ENCODE measurements at regions of chr22 and their contacts with region 1.

Region 1: DNA sequence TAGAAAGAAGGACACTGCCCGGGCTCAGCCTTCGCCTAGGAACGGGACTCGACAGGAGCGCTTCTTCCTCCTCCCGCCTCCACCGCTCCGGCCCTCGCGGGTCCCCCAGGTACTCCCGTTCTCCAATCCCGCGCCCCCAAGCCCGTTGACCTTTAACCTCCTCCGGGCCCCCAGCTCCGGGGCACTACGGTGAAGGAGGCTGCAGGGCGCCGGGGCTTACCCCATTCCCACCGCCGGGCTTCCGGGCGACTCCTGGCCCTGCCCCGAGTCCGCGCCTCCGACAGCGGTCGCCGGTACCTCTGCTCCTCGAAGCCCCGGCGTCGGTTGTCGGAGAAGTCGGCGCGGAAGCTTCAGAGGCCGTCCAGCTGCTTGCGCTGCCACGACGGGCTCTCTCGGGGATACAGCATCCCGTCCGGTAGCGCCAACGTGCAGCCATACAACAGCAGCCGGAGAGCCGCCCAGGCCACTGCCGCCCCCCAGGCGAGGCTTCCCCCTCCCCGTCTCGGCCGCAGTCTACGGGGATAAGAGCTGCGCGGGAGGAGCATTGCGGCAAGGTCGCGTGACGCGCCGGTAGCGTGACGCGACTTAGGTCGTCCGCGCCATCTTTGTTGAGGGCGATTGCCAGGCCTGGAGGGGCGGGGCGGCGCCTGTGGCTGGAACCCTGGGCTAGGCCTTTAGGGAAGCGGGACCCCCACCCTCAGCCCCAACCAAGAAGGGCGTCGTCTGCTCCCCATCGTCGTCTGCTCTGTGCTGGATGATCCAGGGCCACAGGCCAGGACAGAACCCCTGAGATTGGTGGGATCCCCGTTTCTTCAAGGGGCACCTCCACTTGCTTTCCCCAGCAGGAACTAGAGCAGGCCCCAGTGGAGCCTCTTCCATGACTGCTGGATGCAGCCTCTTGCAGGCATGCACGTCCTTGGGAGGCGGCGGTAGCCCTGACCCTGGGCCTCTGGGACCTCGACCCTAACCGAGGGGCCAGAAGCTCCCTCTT is 26.3 kb downstream of the RGL4 start:
- DNase-seq: peak; percentile 65 to 92 (median 76)
- ATAC-seq: peak; percentile 97
- H3K4me3 ChIP-seq: peak overlapping the region; percentile 93
- H3K4me3 Mint-ChIP-seq: peak overlapping the region; percentile 90
- H3K27ac ChIP-seq: peak overlapping the region; percentile 64 to 68
- H3K27ac Mint-ChIP-seq: peak overlapping the region; percentile 85
- H3K4me1 ChIP-seq: peaks cover 27% of the 10 kb centered on the region
- H3K4me1 Mint-ChIP-seq: peaks cover 16% of the 10 kb centered on the region
- H3K27me3 ChIP-seq: no peaks in the 10 kb centered on the region
- H3K27me3 Mint-ChIP-seq: no peaks in the 10 kb centered on the region
- CTCF ChIP-seq: no peak

Region 2: GRCh38 chr22:23539135-23539838 is 177.8 kb before region 1 on chr22:
- CTCF ChIA-PET with region 1: no interaction called
- POLR2A ChIA-PET with region 1: no interaction called
- intact Hi-C with region 1: no loop called
- DNase-seq: peak; percentile 59 to 88 (median 66)
- ATAC-seq: peak; percentile 100
- H3K4me3 ChIP-seq: no peak overlapping the region
- H3K4me3 Mint-ChIP-seq: peak overlapping the region; percentile 20
- H3K27ac ChIP-seq: no peak overlapping the region
- H3K27ac Mint-ChIP-seq: no peak overlapping the region
- H3K4me1 ChIP-seq: peaks cover 6% of the 10 kb centered on the region
- H3K4me1 Mint-ChIP-seq: peaks cover 10% of the 10 kb centered on the region
- H3K27me3 ChIP-seq: no peaks in the 10 kb centered on the region
- H3K27me3 Mint-ChIP-seq: no peaks in the 10 kb centered on the region
- CTCF ChIP-seq: peak; percentile 81

Region 3: GRCh38 chr22:23696326-23696851 is 20.7 kb before region 1 on chr22:
- CTCF ChIA-PET with region 1: no interaction called
- POLR2A ChIA-PET with region 1: interaction called, 74 read pairs
- intact Hi-C with region 1: loop called (anchors 1 kb)
- DNase-seq: peak; percentile 71 to 92 (median 76)
- ATAC-seq: peak; percentile 97
- H3K4me3 ChIP-seq: peak overlapping the region; percentile 64
- H3K4me3 Mint-ChIP-seq: peak overlapping the region; percentile 89
- H3K27ac ChIP-seq: peak overlapping the region; percentile 91 to 97
- H3K27ac Mint-ChIP-seq: peak overlapping the region; percentile 97
- H3K4me1 ChIP-seq: peaks cover 53% of the 10 kb centered on the region
- H3K4me1 Mint-ChIP-seq: peaks cover 46% of the 10 kb centered on the region
- H3K27me3 ChIP-seq: no peaks in the 10 kb centered on the region
- H3K27me3 Mint-ChIP-seq: no peaks in the 10 kb centered on the region
- CTCF ChIP-seq: no peak

Region 4: DNA sequence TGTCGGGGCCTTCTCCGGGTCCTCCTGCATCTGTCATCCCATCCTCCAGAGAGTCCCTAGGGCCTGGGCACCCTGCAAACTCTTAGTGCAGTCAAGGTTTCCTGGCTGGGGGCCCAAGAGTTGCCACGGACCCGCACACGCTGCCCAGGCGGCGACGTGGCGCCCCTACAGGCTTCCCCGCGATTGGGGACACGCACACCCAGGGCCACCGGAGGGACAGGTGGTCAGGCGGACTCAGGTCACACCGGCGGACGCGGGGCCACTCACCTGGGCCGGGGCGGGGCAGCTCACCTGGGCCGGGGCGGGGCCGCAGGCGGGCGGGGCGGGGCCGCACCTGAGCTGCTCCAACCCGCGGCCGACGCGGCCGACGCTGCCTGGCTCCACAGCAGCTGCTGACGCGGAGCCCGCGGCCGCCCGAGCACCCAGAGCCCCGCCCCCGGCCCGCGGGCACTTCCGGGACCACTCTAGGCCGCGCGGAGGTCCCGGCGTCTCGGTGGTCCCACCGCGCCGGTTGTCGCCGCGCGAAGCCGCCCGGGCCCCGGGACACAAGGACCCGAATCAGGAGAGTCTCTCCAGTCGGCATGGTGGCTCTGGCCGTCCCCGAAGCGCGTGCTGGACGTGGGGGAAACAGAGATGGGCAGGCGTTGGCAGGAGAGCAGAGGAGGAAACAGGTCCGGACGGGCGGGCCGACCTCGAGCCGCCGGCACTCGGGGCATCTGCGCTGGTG is 33.8 kb after region 1 on chr22 and contains the start of gene ZNF70:
- CTCF ChIA-PET with region 1: interaction called, 3 read pairs
- POLR2A ChIA-PET with region 1: interaction called, 11 read pairs
- intact Hi-C with region 1: loop called in 1 of 2 experiments (anchors 1 kb)
- DNase-seq: peak; percentile 67 to 95 (median 84)
- ATAC-seq: peak; percentile 99
- H3K4me3 ChIP-seq: peak within 1 kb of the TSS; percentile 84
- H3K4me3 Mint-ChIP-seq: peak within 1 kb of the TSS; percentile 81
- H3K27ac ChIP-seq: peak within 1 kb of the TSS; percentile 43 to 73
- H3K27ac Mint-ChIP-seq: peak within 1 kb of the TSS; percentile 72
- H3K4me1 ChIP-seq: peaks cover 17% of the 10 kb centered on the region
- H3K4me1 Mint-ChIP-seq: peaks cover 12% of the 10 kb centered on the region
- H3K27me3 ChIP-seq: no peaks in the 10 kb centered on the region
- H3K27me3 Mint-ChIP-seq: no peaks in the 10 kb centered on the region
- CTCF ChIP-seq: no peak
- total RNA-seq, gene ZNF70: 1.3 to 1.9 TPM

Region 5: GRCh38 chr22:23767673-23768548 is 50.8 kb after region 1 on chr22 and contains the start of gene CHCHD10:
- CTCF ChIA-PET with region 1: no interaction called
- POLR2A ChIA-PET with region 1: no interaction called
- intact Hi-C with region 1: loop called in 1 of 2 experiments (anchors 5 kb)
- DNase-seq: peak; percentile 55 to 84 (median 70)
- ATAC-seq: peak; percentile 72
- H3K4me3 ChIP-seq: peak within 1 kb of the TSS; percentile 85
- H3K4me3 Mint-ChIP-seq: peak within 1 kb of the TSS; percentile 85
- H3K27ac ChIP-seq: peak within 1 kb of the TSS in 1 of 2 donors; percentile 23
- H3K27ac Mint-ChIP-seq: peak within 1 kb of the TSS; percentile 51
- H3K4me1 ChIP-seq: peaks cover 66% of the 10 kb centered on the region
- H3K4me1 Mint-ChIP-seq: peaks cover 29% of the 10 kb centered on the region
- H3K27me3 ChIP-seq: no peaks in the 10 kb centered on the region
- H3K27me3 Mint-ChIP-seq: no peaks in the 10 kb centered on the region
- CTCF ChIP-seq: peak; percentile 62
- total RNA-seq, gene CHCHD10: 34.4 to 43.0 TPM

Region 6: GRCh38 chr22:23838681-23839468 is 121.8 kb after region 1 on chr22 and contains the start of gene DERL3:
- CTCF ChIA-PET with region 1: no interaction called
- POLR2A ChIA-PET with region 1: no interaction called
- intact Hi-C with region 1: loop called in 1 of 2 experiments (anchors 5 kb)
- DNase-seq: peak; percentile 86 to 98 (median 94)
- ATAC-seq: peak; percentile 94
- H3K4me3 ChIP-seq: peak within 1 kb of the TSS; percentile 80
- H3K4me3 Mint-ChIP-seq: peak within 1 kb of the TSS; percentile 91
- H3K27ac ChIP-seq: no peak within 1 kb of the TSS
- H3K27ac Mint-ChIP-seq: peak within 1 kb of the TSS; percentile 52
- H3K4me1 ChIP-seq: peaks cover 25% of the 10 kb centered on the region
- H3K4me1 Mint-ChIP-seq: peaks cover 19% of the 10 kb centered on the region
- H3K27me3 ChIP-seq: no peaks in the 10 kb centered on the region
- H3K27me3 Mint-ChIP-seq: no peaks in the 10 kb centered on the region
- CTCF ChIP-seq: no peak
- total RNA-seq, gene DERL3: 0.66 to 0.98 TPM

Region 7: DNA sequence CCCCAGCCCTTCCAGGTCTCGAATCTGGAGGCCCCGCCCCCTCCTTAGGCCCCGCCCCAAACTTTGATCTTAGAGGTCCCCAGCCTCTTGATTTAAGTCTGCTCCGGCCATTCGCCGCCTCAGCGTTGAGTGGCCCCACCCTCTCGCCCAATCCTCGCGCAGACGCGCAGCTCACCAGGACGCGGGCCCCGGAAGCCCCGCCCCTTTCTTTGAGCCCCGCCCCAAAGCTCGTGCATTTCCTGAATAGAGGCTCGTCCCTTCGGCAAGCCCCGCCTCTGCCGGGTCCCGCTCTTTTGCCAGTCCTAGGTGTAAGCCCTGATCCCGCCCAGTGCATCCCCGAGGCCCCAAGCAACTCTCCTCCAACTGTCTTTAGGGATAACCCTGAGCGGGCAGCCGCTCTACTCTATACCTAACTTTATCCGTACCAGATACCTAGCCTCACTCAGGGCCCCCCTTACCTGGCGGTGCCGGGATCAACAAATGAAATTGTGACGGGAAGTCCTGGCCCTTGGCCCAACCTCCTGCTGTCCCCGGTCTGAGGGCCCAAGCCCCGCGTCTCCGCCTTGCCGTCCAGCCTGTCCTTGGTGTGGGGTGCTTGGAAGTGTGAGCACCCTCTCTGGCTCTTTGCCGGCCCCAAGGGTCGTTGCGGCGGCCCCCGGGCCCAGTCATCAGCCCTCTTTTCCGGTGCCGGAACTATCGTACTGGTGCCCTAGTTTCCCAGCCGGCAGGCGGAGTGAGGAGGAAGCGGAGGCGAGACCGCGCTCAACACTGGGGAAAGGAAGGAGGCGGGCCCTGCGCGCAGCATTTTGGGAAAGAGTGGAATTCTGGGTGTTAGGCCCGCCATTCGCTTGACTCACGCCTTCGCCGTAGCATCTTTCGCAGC is 838.3 kb after region 1 on chr22 and contains the start of gene SNRPD3:
- CTCF ChIA-PET with region 1: no interaction called
- POLR2A ChIA-PET with region 1: no interaction called
- intact Hi-C with region 1: loop called in 1 of 2 experiments (anchors 10 kb)
- DNase-seq: peak; percentile 99 to 100 (median 100)
- ATAC-seq: peak; percentile 83
- H3K4me3 ChIP-seq: peak within 1 kb of the TSS; percentile 78
- H3K4me3 Mint-ChIP-seq: peak within 1 kb of the TSS; percentile 97
- H3K27ac ChIP-seq: peak within 1 kb of the TSS; percentile 97 to 98
- H3K27ac Mint-ChIP-seq: peak within 1 kb of the TSS; percentile 89
- H3K4me1 ChIP-seq: peaks cover 52% of the 10 kb centered on the region
- H3K4me1 Mint-ChIP-seq: peaks cover 82% of the 10 kb centered on the region
- H3K27me3 ChIP-seq: no peaks in the 10 kb centered on the region
- H3K27me3 Mint-ChIP-seq: no peaks in the 10 kb centered on the region
- CTCF ChIP-seq: no peak
- total RNA-seq, gene SNRPD3: 31.0 to 31.5 TPM

Measured in CD4-positive, alpha-beta T cell (primary cell).